Activated CD4-positive, alpha-beta memory T cell treated with anti-CD3 and anti-CD28 coated beads for 36 hours (primary cell): ENCODE measurements at regions of chr17 and their contacts with region 1.

Region 1: GRCh38 chr17:5584383-5585286 is at the start of gene NLRP1:
- DNase-seq: peak; percentile 98
- H3K4me3 Mint-ChIP-seq: peak within 1 kb of the TSS; percentile 96
- H3K27ac Mint-ChIP-seq: peak within 1 kb of the TSS; percentile 96
- H3K4me1 Mint-ChIP-seq: peaks cover 65% of the 10 kb centered on the region
- H3K27me3 Mint-ChIP-seq: no peaks in the 10 kb centered on the region
- total RNA-seq, gene NLRP1: 39.9 to 45.0 TPM

Region 2: DNA sequence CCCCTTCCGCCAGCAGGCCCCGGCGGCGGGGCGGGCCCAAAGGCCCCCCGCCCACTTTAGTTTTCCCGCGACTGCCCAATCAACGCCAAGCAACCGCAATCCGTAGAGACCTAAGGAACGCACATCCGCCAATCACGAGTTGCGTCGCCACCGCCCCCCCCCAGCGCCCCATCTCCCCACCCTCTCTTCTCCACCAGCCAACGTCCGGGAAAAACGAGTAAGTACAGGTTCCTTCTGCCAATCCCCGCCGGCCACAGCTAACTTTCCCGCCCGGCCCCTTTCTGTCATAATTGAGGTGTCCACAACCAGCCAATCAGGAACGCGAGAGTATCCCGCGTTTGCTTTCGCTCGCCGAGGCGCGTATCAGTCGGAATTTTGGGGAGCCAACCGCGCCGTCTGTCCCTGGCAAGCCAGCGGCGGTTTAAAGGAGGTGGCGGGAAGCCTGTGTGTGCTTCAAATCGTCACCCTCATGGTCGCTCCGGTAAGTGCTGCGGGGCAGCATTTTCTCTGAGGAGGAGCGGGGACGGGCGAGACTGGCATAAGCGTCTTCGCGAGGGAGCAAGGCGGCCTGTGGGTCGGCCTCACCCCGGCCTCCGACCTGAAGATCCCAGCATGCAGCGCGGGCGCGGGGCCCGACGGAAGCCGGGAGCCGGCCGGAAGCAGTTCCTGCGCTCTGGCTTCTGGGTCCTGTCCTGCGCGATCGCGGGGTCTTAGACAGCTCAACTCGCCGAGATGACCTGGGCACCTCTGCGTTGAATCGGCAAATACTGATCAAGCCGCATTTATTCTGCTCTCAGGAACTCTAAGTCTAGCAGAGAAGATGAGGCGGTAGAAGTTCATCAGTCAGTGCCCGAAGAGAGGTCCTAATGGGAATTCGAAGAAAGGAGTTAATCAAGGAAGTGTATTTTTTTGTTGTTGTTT is 98.2 kb before region 1 on chr17 and contains the start of gene MIS12:
- CTCF ChIA-PET with region 1: no interaction called
- POLR2A ChIA-PET with region 1: interaction called, 4 read pairs
- intact Hi-C with region 1: loop called (anchors 1 kb)
- DNase-seq: peak; percentile 99
- H3K4me3 Mint-ChIP-seq: peak within 1 kb of the TSS; percentile 88
- H3K27ac Mint-ChIP-seq: peak within 1 kb of the TSS; percentile 98
- H3K4me1 Mint-ChIP-seq: peaks cover 54% of the 10 kb centered on the region
- H3K27me3 Mint-ChIP-seq: no peaks in the 10 kb centered on the region
- total RNA-seq, gene MIS12: 30.4 to 32.0 TPM

Region 3: GRCh38 chr17:5832886-5833285 is 248.3 kb after region 1 on chr17:
- CTCF ChIA-PET with region 1: no interaction called
- POLR2A ChIA-PET with region 1: no interaction called
- intact Hi-C with region 1: no loop called
- DNase-seq: no peak
- H3K4me3 Mint-ChIP-seq: no peak overlapping the region
- H3K27ac Mint-ChIP-seq: no peak overlapping the region
- H3K4me1 Mint-ChIP-seq: peaks cover 12% of the 10 kb centered on the region
- H3K27me3 Mint-ChIP-seq: peaks cover 3% of the 10 kb centered on the region

Region 4: DNA sequence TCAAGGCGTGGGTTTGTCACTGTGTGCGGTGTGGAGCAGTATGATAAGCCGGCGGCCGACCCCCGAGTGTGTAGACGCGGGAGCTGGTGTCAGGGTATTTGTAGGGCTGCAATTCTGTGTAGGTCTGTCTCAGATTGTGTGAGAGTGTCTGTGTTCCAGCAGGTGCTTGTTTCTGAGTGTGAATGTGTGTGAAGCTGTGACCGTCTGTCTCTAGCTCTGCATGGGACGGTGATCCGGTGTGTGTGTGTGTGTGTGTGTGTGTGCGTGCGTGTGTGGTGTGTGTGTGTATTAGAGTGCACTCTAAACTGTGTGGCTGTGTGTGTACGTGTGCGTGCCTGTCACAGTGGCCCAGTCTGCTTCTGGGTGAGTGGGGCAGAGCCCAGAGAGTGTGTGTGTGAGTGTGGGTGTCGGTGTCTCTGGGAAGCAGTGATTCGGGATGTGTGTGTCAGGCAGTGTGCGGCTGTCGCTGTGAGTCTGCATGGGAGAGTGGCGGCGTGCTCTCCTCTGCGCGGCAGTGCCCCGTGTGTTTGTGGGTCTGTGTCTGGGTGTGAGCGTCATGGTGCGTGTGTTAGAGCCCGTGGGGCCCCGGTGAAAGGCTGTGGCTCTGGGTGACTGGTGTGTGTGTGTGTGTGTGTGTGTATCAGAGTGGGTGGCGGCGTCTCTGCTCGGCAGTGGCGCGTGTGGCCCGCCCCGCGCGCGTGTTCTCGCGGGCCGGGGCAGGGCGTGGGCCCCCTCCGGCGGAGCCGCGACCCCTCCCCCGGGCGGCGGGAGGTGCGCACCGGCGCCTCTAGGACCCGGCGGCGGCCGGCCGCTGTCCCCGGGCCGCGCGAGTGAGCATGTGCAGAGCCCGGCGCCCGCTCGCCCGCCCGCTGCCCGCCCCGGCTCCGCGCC is 485.1 kb after region 1 on chr17 and contains the start of gene WSCD1:
- CTCF ChIA-PET with region 1: no interaction called
- POLR2A ChIA-PET with region 1: no interaction called
- intact Hi-C with region 1: loop called (anchors 10 kb)
- DNase-seq: no peak
- H3K4me3 Mint-ChIP-seq: peak within 1 kb of the TSS; percentile 72
- H3K27ac Mint-ChIP-seq: no peak within 1 kb of the TSS
- H3K4me1 Mint-ChIP-seq: peaks cover 10% of the 10 kb centered on the region
- H3K27me3 Mint-ChIP-seq: peaks cover 46% of the 10 kb centered on the region
- total RNA-seq, gene WSCD1: 0.50 to 0.53 TPM

Region 5: GRCh38 chr17:6421700-6422604 is 837.3 kb after region 1 on chr17:
- CTCF ChIA-PET with region 1: interaction called, 14 read pairs
- POLR2A ChIA-PET with region 1: no interaction called
- intact Hi-C with region 1: loop called (anchors 1 kb)
- DNase-seq: peak; percentile 83
- H3K4me3 Mint-ChIP-seq: no peak overlapping the region
- H3K27ac Mint-ChIP-seq: no peak overlapping the region
- H3K4me1 Mint-ChIP-seq: peaks cover 2% of the 10 kb centered on the region
- H3K27me3 Mint-ChIP-seq: peaks cover 23% of the 10 kb centered on the region

Region 6: DNA sequence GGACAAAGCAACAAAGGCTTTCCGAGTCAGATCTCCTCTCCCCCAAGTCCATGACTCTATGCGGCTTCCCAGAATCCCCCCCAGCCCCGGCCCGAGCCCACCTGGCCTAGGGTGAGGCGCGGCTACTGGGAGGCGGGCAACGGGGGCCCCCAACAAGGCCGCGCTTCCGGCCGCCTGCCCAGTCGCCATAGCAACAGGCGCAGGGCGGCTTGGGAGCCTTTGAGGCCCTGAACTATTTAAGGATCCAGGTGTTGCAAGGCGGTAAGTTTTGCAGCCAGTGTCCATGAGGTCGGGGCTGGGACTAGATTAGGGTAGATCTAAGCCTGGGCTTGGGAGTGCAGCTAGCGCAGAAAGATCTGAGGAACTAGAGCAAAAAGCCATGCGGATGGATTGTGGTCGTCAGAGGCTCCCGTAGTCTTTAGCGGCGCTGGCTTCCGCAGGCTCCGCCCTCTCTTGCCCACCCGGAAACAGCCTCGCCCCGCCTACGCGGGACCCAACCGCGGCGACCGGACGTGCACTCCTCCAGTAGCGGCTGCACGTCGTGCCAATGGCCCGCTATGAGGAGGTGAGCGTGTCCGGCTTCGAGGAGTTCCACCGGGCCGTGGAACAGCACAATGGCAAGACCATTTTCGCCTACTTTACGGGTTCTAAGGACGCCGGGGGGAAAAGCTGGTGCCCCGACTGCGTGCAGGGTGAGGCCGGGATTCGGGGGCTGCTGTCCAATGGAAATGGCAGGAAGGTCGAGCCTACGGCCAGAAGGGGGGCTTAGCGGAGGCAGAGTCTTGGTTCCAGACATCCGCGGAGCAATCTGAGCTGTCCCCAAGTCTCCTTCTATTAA is 1056.1 kb after region 1 on chr17 and contains the starts of genes KIAA0753 and TXNDC17:
- CTCF ChIA-PET with region 1: no interaction called
- POLR2A ChIA-PET with region 1: no interaction called
- intact Hi-C with region 1: loop called (anchors 5 kb)
- DNase-seq: peak; percentile 96
- H3K4me3 Mint-ChIP-seq: peak within 1 kb of the TSS; percentile 90
- H3K27ac Mint-ChIP-seq: peak within 1 kb of the TSS; percentile 95
- H3K4me1 Mint-ChIP-seq: peaks cover 59% of the 10 kb centered on the region
- H3K27me3 Mint-ChIP-seq: no peaks in the 10 kb centered on the region
- total RNA-seq, gene KIAA0753: 14.2 to 14.7 TPM
- total RNA-seq, gene TXNDC17: 107 to 123 TPM